Motor neuron (in vitro differentiated cells): ENCODE measurements at regions of chr18 and their contacts with region 1.

Region 1: DNA sequence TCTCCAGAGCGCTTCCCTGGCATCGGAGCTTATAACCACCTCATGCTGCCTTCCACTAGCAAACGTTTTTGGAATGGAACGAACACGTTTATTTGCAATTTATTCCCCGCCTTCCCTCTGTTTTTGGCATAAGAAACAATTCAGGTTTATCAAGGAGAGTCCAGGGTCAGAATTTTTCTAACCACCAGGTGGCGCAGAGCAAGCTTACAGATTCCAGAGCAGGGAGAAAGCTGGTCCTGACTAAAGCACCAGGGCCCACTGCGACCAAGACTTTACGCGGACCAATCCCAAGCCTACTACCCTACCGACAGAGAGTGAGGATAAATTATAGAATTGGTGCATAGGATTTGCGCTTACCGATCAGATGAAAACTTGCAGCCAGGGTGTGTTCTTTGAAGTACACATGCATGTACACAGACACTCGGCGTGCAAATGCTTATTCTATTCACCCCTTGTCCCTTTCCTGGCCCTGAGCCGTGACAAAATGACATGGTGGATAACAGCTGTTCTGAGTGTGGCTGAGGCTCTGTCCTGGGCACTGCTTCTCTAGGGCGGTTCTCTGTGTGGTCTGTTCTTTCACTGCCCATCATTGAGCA is 34.7 kb downstream of the NAPG start:
- ATAC-seq: peak; percentile 66 to 92 (median 84)
- H3K4me3 ChIP-seq: no peak overlapping the region
- H3K27ac ChIP-seq: no peak overlapping the region
- H3K4me1 ChIP-seq: peaks cover 10 to 18% of the 10 kb centered on the region in 2 donors

Region 2: GRCh38 chr18:10660179-10660884 is 99.8 kb after region 1 on chr18:
- in situ Hi-C with region 1: loop called in 1 of 9 experiments (anchors 25 kb)
- ATAC-seq: peak; percentile 87 to 97 (median 95)
- H3K4me3 ChIP-seq: no peak overlapping the region
- H3K27ac ChIP-seq: peak overlapping the region; percentile 80 to 96
- H3K4me1 ChIP-seq: peaks cover 29 to 50% of the 10 kb centered on the region in 2 donors

Region 3: GRCh38 chr18:10841203-10841602 is 280.7 kb after region 1 on chr18:
- in situ Hi-C with region 1: loop called in 1 of 9 experiments (anchors 25 kb)
- ATAC-seq: peak in 1 of 8 experiments; percentile 16
- H3K4me3 ChIP-seq: no peak overlapping the region
- H3K27ac ChIP-seq: no peak overlapping the region
- H3K4me1 ChIP-seq: no peaks in the 10 kb centered on the region

Region 4: GRCh38 chr18:11149441-11150270 is 589.1 kb after region 1 on chr18 and contains the start of gene PIEZO2:
- in situ Hi-C with region 1: loop called in 4 of 9 experiments (anchors 10 to 25 kb)
- ATAC-seq: peak; percentile 93 to 97 (median 96)
- H3K4me3 ChIP-seq: peak within 1 kb of the TSS; percentile 35 to 42 (median 39)
- H3K27ac ChIP-seq: no peak within 1 kb of the TSS
- H3K4me1 ChIP-seq: peaks cover 0 to 12% of the 10 kb centered on the region in 2 donors
- total RNA-seq, gene PIEZO2: 1.9 to 73.5 (median 2.8) TPM

Region 5: DNA sequence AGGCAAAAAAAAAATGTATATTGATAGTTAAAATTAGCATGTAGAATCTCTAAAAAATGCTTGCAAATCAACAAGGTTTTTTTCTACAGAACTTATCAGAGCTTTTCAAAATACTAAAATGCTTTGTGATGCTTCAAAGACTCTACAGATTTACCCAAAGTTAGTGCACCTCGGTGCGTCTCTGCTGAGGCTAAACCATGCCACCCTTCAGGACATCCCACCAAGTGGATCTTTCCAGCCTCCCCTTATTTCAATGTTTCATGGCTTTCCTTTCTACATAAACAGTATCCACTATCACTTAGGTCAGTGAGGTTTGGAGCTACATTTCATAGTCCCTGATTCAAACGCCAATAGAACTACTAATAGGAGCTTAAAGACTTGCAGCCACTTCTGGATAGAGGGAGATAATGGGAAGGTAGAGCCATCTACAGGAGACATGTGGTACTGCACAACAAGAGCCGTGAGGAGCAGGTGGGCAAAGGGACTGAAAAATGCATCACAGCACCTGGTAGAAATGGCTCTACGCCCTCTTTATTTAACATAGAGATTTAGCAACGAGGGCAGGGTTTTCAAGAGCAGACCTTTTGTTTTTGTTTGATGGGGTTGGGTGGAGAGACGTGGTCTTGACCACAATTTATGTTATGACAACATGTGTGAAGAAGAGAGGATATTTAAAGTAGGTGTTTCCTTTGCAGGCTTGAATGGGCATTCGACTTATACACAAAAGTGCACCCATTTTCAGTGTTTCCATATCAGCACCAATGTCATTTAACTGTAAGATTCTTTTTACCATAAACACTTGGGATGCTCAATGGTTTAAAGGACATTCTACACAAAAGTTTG is 992.8 kb after region 1 on chr18:
- in situ Hi-C with region 1: loop called in 3 of 9 experiments (anchors 25 kb)
- ATAC-seq: peak; percentile 68 to 90 (median 81)
- H3K4me3 ChIP-seq: no peak overlapping the region
- H3K27ac ChIP-seq: no peak overlapping the region
- H3K4me1 ChIP-seq: no peaks in the 10 kb centered on the region